OCI-LY7 (cell line): ENCODE measurements at regions of chr13 and their contacts with region 1.

Region 1: DNA sequence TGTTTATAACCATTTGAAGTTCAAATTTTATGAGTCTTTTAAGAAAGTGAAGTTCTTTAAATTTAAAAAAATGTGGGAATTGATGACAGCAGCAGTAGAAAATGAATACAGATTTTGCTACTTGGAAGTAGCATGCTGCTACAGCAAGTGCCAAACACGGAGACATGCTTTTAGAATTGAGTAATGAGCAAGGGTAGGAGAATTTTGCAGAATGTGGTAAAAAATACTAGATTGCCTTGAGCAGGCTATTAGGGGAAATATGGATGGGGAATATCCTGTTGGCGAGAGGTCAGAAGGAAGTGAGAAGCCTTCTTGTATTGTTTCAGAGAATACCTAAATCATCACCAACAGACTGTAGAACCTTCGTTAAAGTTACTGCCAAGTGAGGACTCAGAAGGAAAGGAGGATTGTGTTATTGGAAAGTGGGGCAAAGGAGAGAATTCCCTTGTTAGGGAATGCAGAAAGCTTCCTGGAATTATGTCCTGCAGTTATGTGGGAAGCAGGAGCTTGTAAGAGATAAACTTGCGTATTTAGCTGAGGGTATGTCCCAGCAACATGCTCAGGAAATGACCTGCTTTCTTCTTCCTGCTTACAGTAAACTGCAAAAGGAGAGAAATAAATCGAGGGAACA is 32.4 kb upstream of the OXGR1 start:
- DNase-seq: no peak
- H3K4me3 ChIP-seq: no peak overlapping the region
- H3K27ac ChIP-seq: no peak overlapping the region
- H3K4me1 ChIP-seq: no peaks in the 10 kb centered on the region
- CTCF ChIP-seq: no peak

Region 2: DNA sequence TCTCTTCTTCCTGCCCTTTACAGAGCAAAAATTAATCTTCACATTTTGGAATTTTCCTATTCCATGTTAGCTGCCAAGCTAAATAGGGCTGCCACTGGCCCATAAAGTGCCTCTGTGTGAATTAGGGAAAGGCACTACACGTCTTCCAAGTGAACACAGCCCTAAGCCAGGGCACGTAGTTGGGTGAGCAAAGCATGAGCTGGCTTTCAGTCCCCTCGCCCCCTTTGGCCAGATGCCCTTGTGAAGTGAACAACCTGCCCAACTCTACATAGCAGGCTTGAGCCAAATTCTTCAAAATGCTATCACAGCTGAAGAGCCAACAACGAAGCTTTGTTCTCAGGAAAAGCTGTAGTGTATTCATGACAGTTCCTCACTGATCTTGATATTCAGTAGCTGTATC is 245.5 kb before region 1 on chr13:
- CTCF ChIA-PET with region 1: no interaction called
- POLR2A ChIA-PET with region 1: no interaction called
- intact Hi-C with region 1: no loop called
- DNase-seq: no peak
- H3K4me3 ChIP-seq: no peak overlapping the region
- H3K27ac ChIP-seq: no peak overlapping the region
- H3K4me1 ChIP-seq: no peaks in the 10 kb centered on the region
- CTCF ChIP-seq: no peak

Region 3: DNA sequence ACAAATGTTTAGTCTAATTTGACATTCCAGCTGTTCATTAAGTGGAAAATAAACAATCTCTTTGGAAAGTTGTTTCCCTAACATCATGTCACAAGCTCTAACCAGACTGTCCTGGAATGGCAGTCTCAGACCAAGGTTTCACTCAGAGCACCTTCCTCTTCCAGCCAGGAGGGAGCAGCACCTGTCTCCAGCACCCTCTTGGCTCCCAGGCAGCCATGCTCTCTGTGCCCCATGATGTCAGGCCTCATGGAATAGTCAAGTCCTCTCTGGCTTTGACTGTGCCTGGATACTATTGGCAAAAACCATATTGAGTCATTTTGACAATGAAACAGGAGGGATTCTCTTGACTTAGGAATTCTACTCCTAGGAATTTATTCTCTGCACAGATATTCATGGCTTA is 203.8 kb before region 1 on chr13:
- CTCF ChIA-PET with region 1: no interaction called
- POLR2A ChIA-PET with region 1: no interaction called
- intact Hi-C with region 1: loop called (anchors 10 kb)
- DNase-seq: peak; percentile 5
- H3K4me3 ChIP-seq: no peak overlapping the region
- H3K27ac ChIP-seq: no peak overlapping the region
- H3K4me1 ChIP-seq: no peaks in the 10 kb centered on the region
- CTCF ChIP-seq: peak; percentile 53